Activated CD4-positive, alpha-beta T cell treated with anti-CD3 and anti-CD28 coated beads, Interleukin-2, amount 10 ng/mL, durations not matched to agents 7 days and 5 days (primary cell): ENCODE measurements at regions of chr12 and their contacts with region 1.

Region 1: DNA sequence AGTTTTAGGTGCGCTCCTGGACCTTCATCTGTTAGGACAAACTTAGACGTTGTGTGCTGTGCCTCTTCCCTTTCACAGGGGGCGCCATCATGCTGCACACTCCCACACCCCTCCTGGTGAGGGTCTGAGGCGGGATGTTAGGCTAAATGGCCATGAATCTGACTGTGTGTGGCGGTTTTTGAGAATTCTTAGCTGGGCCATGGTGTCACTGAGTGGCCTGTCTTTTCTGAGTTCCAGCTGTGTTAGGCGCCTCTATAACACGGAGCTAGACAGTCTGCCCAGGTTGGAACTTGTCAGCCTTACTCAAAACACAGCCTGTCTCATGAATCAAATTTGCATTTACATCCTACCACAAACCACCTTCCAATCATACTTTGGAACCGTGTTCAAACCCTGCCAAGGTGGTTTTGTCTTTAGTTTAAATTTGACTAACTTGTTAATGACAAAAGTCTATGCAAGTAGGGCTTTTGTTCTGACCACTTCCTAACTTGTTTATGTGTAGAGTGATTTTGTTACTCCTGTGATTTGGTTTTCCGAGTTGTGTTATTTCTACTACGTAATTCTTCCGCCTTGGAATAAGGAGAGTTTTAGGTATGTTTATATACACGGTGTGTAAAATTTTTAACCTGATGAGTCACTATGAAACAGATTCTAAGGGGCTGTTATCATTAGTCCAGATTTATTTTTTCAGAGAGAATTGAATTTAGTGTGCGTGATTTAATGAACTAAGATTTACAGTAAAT is 19.6 kb downstream of the ACVR1B start:
- DNase-seq: peak; percentile 60
- H3K4me3 Mint-ChIP-seq: peak overlapping the region; percentile 51
- H3K27ac Mint-ChIP-seq: peak overlapping the region; percentile 70
- H3K4me1 Mint-ChIP-seq: peaks cover 62% of the 10 kb centered on the region
- H3K27me3 Mint-ChIP-seq: peaks cover 8% of the 10 kb centered on the region

Region 2: GRCh38 chr12:51959211-51959610 is 11.9 kb before region 1 on chr12:
- CTCF ChIA-PET with region 1: interaction called, 12 read pairs
- POLR2A ChIA-PET with region 1: no interaction called
- DNase-seq: no peak
- H3K4me3 Mint-ChIP-seq: no peak overlapping the region
- H3K27ac Mint-ChIP-seq: no peak overlapping the region
- H3K4me1 Mint-ChIP-seq: peaks cover 21% of the 10 kb centered on the region
- H3K27me3 Mint-ChIP-seq: no peaks in the 10 kb centered on the region